Posterior cingulate gyrus (tissue), 11 donors: ENCODE measurements at regions of chr10 and their contacts with region 1.

Region 1: DNA sequence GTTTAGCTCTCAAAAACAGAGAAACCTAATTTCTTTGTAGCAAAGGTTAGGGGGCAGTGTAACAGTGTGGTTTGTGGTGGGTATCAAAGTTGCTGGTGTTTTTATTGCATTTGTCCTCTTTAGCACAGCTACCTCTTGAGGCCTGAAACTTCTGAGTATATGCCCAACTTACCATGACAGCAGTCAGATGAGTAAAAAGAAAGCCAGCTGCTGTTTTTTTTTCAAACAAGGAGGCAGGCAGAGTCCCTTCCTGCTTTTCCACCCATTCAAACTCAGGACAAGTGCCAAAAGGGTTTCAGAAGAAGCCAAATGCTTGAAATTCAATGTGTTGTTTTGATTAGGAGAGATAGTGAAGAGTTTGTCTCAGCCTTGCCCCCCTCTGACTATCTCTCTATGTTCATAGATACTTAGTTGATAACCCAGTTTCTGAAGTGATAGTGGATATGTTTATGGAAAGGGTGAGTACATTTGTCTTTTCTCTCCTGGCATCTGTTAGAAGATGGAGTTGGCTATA is 23.1 kb downstream of the GBF1 start:
- DNase-seq: no peak

Region 2: DNA sequence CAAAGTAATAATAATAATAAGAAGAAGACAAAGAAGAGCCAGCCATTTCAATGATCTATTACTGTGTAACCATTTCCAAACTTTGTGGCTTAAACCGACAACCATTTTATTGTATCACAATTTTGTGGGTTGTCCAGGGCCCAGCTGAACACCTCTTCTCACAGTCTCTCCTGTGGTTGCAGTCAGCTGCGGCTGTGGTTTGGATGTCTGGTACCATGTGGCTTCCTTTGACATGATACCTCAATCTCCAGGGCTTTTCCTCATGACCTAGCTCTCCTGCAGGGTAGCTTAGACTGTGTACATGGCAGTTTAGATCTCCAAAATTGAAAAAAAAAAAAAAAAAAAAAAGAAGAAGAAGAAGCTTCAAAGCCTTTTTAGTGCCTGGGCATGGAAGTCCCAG is 54.5 kb after region 1 on chr10:
- intact Hi-C with region 1: loop called (anchors 10 kb)
- DNase-seq: no peak